CD4-positive, alpha-beta memory T cell (primary cell): ENCODE measurements at regions of chr12 and their contacts with region 1.

Region 1: GRCh38 chr12:7219599-7220243 is 30.2 kb downstream of the PEX5 start:
- DNase-seq: peak; percentile 67 to 69 (median 68)
- H3K4me3 ChIP-seq: no peak overlapping the region
- H3K4me3 Mint-ChIP-seq: no peak overlapping the region
- H3K27ac ChIP-seq: no peak overlapping the region
- H3K27ac Mint-ChIP-seq: no peak overlapping the region
- H3K4me1 ChIP-seq: no peaks in the 10 kb centered on the region
- H3K4me1 Mint-ChIP-seq: no peaks in the 10 kb centered on the region
- H3K27me3 ChIP-seq: no peaks in the 10 kb centered on the region
- H3K27me3 Mint-ChIP-seq: no peaks in the 10 kb centered on the region

Region 2: DNA sequence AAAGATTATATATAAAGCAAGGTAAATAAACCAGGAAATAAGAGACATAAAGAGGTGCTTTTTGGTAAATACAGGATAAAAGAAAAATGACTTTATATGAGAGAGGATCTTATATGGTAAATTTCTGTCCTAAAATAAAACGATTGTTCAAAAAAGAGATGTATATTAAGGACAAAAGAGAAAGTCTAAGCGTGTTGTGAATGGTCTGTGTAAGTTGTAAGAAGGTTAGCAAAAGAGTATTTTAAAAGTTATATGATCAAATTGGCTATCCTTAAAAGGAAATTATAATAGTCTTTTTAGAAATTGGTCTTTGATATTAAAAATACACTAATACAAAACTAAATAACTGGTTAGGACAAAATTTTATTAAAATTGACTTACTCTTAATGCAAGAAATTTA is 70.0 kb after region 1 on chr12:
- CTCF ChIA-PET with region 1: no interaction called
- POLR2A ChIA-PET with region 1: no interaction called
- intact Hi-C with region 1: no loop called
- DNase-seq: no peak
- H3K4me3 ChIP-seq: no peak overlapping the region
- H3K4me3 Mint-ChIP-seq: no peak overlapping the region
- H3K27ac ChIP-seq: no peak overlapping the region
- H3K27ac Mint-ChIP-seq: no peak overlapping the region
- H3K4me1 ChIP-seq: no peaks in the 10 kb centered on the region
- H3K4me1 Mint-ChIP-seq: peaks cover 0 to 3% (median under 1%) of the 10 kb centered on the region in 4 donors
- H3K27me3 ChIP-seq: no peaks in the 10 kb centered on the region
- H3K27me3 Mint-ChIP-seq: peaks cover 2 to 9% of the 10 kb centered on the region in 2 donors

Region 3: DNA sequence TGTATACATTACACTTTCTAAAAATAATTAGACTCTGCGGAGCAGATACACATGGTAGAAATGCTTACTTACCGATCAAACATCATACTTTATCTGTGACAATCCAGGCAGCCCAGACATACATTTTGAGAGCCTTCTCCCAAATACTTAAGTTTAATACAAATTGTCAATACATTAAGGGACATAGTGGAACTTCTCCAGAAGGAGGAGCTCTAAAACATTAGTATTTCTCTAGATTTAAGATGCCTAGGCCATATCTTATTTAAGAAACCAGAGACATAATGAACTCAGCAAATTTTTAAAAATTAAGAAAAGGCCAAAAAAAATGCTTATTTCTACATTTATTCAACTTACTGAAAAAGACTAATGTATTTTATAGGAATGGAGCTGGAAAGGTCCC is 100.2 kb after region 1 on chr12:
- CTCF ChIA-PET with region 1: interaction called, 4 read pairs
- POLR2A ChIA-PET with region 1: no interaction called
- intact Hi-C with region 1: loop called (anchors 5 kb)
- DNase-seq: peak in 1 of 5 donors; percentile 8
- H3K4me3 ChIP-seq: no peak overlapping the region
- H3K4me3 Mint-ChIP-seq: no peak overlapping the region
- H3K27ac ChIP-seq: no peak overlapping the region
- H3K27ac Mint-ChIP-seq: peak overlapping the region in 1 of 7 donors; percentile 11
- H3K4me1 ChIP-seq: no peaks in the 10 kb centered on the region
- H3K4me1 Mint-ChIP-seq: no peaks in the 10 kb centered on the region
- H3K27me3 ChIP-seq: no peaks in the 10 kb centered on the region
- H3K27me3 Mint-ChIP-seq: no peaks in the 10 kb centered on the region

Region 4: GRCh38 chr12:7460375-7461259 is 240.9 kb after region 1 on chr12:
- CTCF ChIA-PET with region 1: interaction called, 50 read pairs
- POLR2A ChIA-PET with region 1: no interaction called
- intact Hi-C with region 1: loop called (anchors 1 kb)
- DNase-seq: peak; percentile 45 to 53 (median 50)
- H3K4me3 ChIP-seq: no peak overlapping the region
- H3K4me3 Mint-ChIP-seq: no peak overlapping the region
- H3K27ac ChIP-seq: no peak overlapping the region
- H3K27ac Mint-ChIP-seq: no peak overlapping the region
- H3K4me1 ChIP-seq: no peaks in the 10 kb centered on the region
- H3K4me1 Mint-ChIP-seq: no peaks in the 10 kb centered on the region
- H3K27me3 ChIP-seq: no peaks in the 10 kb centered on the region
- H3K27me3 Mint-ChIP-seq: peaks cover 3% of the 10 kb centered on the region in 2 donors

Region 5: DNA sequence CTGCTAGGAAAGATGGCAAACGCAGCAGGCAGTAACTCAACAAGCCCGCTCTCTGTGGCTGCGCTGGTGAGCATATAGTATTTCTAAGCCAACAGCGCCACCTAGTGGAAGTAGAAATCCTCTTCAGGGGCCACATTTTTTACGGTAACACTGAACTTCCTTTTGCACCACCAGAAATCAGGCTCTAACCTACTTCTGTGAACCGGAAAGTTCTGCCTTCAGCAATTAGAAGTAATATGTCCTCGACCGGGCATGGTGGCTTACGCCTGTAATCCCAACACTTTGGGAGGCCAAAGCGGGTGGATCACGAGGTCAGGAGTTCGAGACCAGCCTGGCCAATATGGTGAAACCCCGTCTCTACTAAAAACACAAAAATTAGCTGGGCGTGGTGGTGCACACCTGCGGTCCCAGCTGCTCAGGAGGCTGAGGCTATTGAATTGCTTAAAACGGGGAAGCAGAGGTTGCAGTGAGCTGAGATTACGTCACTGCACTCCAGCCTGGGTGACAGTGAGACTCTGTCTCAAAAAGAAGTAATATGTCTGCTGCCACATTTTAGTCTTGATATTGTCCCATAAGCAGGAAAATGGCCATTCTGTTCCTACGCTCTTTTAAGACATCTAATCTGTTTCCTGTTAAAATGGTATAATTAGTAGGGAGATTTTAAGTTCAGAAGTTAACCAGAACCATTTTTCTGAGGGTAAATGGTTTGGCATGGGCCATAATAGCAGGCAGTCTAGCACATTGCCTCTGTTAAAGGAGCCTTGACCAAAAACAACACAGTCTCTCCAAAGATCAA is 419.2 kb after region 1 on chr12:
- CTCF ChIA-PET with region 1: interaction called, 53 read pairs
- POLR2A ChIA-PET with region 1: no interaction called
- intact Hi-C with region 1: loop called (anchors 1 kb)
- DNase-seq: peak; percentile 78 to 85 (median 83)
- H3K4me3 ChIP-seq: peak overlapping the region in 1 of 2 donors; percentile 25
- H3K4me3 Mint-ChIP-seq: peak overlapping the region; percentile 72 to 88 (median 82)
- H3K27ac ChIP-seq: no peak overlapping the region
- H3K27ac Mint-ChIP-seq: peak overlapping the region; percentile 66 to 93 (median 86)
- H3K4me1 ChIP-seq: peaks cover 24% of the 10 kb centered on the region
- H3K4me1 Mint-ChIP-seq: peaks cover 21 to 33% (median 24%) of the 10 kb centered on the region in 4 donors
- H3K27me3 ChIP-seq: no peaks in the 10 kb centered on the region
- H3K27me3 Mint-ChIP-seq: peaks cover 2 to 8% of the 10 kb centered on the region in 2 donors